Activated T-helper 1 cell treated with anti-CD3 and anti-CD28 coated beads, Interleukin-12 subunit alpha, Interleukin-12 subunit beta, Interleukin-2, Interleukin-4 antibody, amounts not matched to agents 30 ng/mL and 10 ng/mL and 1 ng/mL, durations not matched to agents 14 hours and 24 hours and 36 hours (primary cell): ENCODE measurements at regions of chr11 and their contacts with region 1.

Region 1: DNA sequence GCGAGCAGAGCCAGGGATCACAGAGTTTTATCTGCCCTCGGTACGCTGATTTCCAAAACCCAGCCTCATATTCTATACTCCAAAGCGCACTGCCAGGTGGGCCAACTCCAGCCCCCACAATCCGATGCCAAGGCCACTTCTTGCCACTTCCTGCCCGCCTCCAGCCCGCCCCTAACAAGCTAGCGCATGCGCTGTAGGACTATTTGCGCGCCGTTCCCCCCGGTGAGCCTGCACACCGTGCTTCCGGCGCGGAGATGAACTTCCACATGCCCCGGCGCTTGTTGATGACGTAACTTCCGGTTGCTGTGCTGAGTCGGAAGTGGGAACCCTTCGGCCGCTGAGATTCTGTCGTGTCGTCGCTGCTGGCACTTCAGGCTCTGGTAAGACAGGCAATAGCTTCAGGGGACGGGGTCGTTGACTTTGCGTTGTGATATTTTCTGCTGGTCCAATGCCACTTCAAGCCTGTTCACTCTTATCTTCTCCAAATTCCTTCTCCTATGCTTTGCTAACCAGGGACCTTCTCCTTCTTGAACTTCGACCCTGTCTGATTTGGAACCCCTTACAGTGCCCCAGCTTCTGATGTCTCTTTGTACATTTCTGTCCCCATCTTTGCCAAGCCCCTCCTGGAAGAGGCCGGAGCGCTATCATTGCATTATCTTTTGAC is at the start of gene UBE4A:
- DNase-seq: peak; percentile 94
- H3K4me3 Mint-ChIP-seq: peak within 1 kb of the TSS; percentile 95
- H3K27ac Mint-ChIP-seq: peak within 1 kb of the TSS; percentile 89
- H3K4me1 Mint-ChIP-seq: peaks cover 39% of the 10 kb centered on the region
- H3K27me3 Mint-ChIP-seq: no peaks in the 10 kb centered on the region
- total RNA-seq, gene UBE4A: 44.1 and 46.0 TPM in 2 replicates

Region 2: GRCh38 chr11:118321386-118322121 is 37.9 kb before region 1 on chr11:
- intact Hi-C with region 1: no loop called
- DNase-seq: no peak
- H3K4me3 Mint-ChIP-seq: no peak overlapping the region
- H3K27ac Mint-ChIP-seq: no peak overlapping the region
- H3K4me1 Mint-ChIP-seq: peaks cover 47% of the 10 kb centered on the region
- H3K27me3 Mint-ChIP-seq: no peaks in the 10 kb centered on the region

Region 3: GRCh38 chr11:118343981-118344515 is 15.4 kb before region 1 on chr11 and contains the start of gene CD3G:
- intact Hi-C with region 1: loop called (anchors 1 kb)
- DNase-seq: peak; percentile 69
- H3K4me3 Mint-ChIP-seq: peak within 1 kb of the TSS; percentile 90
- H3K27ac Mint-ChIP-seq: peak within 1 kb of the TSS; percentile 86
- H3K4me1 Mint-ChIP-seq: peaks cover 82% of the 10 kb centered on the region
- H3K27me3 Mint-ChIP-seq: no peaks in the 10 kb centered on the region
- total RNA-seq, gene CD3G: 134 and 145 TPM in 2 replicates

Region 4: GRCh38 chr11:118401151-118401878 is 41.9 kb after region 1 on chr11 and contains the start of gene ATP5MG:
- intact Hi-C with region 1: loop called (anchors 1 kb)
- DNase-seq: peak; percentile 87
- H3K4me3 Mint-ChIP-seq: peak within 1 kb of the TSS; percentile 93
- H3K27ac Mint-ChIP-seq: peak within 1 kb of the TSS; percentile 96
- H3K4me1 Mint-ChIP-seq: peaks cover 68% of the 10 kb centered on the region
- H3K27me3 Mint-ChIP-seq: no peaks in the 10 kb centered on the region
- total RNA-seq, gene ATP5MG: 205 and 216 TPM in 2 replicates

Region 5: DNA sequence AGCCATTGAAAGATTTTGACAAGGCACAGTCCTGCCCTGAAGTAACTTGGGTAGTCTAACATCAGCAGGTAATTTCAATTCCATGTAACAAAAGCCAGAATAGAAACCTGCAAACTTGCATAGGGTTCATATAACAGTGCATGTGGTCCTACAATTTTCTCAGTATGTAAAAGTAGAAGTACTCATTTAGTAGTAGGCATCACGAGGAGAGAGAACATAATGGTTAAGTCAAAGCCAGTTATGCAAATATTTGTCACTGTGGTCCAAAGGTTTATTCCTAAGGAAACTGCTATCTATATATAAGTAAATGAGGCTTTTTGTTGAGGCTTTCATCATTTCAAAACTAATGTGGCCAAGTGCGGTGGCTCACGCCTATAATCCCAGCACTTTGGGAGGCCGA is 52.1 kb after region 1 on chr11:
- intact Hi-C with region 1: no loop called
- DNase-seq: no peak
- H3K4me3 Mint-ChIP-seq: no peak overlapping the region
- H3K27ac Mint-ChIP-seq: no peak overlapping the region
- H3K4me1 Mint-ChIP-seq: peaks cover 10% of the 10 kb centered on the region
- H3K27me3 Mint-ChIP-seq: no peaks in the 10 kb centered on the region